ENCODE measurements at regions of chr13 and their contacts with region 1.

Region 1: GRCh38 chr13:27362064-27362883 is 62.1 kb upstream of the GTF3A start:
- DNase-seq: peak; percentile 87 to 93
- H3K4me3 ChIP-seq: peak overlapping the region; percentile 44
- H3K4me3 Mint-ChIP-seq: peak overlapping the region; percentile 71
- H3K27ac Mint-ChIP-seq: peak overlapping the region; percentile 28
- H3K4me1 ChIP-seq: peaks cover 4% of the 10 kb centered on the region; the same call in 1 of the 2 replicates
- H3K4me1 Mint-ChIP-seq: peaks cover 18% of the 10 kb centered on the region
- H3K27me3 ChIP-seq: no peaks in the 10 kb centered on the region; the same call in 1 of the 2 replicates
- H3K27me3 Mint-ChIP-seq: no peaks in the 10 kb centered on the region
- CTCF ChIP-seq: peak; percentile 94 to 98

Region 2: GRCh38 chr13:26698392-26699196 is 663.7 kb before region 1 on chr13:
- CTCF ChIA-PET with region 1: no interaction called
- POLR2A ChIA-PET with region 1: no interaction called
- intact Hi-C with region 1: no loop called
- DNase-seq: peak; percentile 78 to 88
- H3K4me3 ChIP-seq: no peak overlapping the region
- H3K4me3 Mint-ChIP-seq: no peak overlapping the region
- H3K27ac Mint-ChIP-seq: no peak overlapping the region
- H3K4me1 ChIP-seq: no peaks in the 10 kb centered on the region
- H3K4me1 Mint-ChIP-seq: no peaks in the 10 kb centered on the region
- H3K27me3 ChIP-seq: no peaks in the 10 kb centered on the region; the same call in 1 of the 2 replicates
- H3K27me3 Mint-ChIP-seq: peaks cover 25% of the 10 kb centered on the region
- CTCF ChIP-seq: peak; percentile 97

Region 3: GRCh38 chr13:26946684-26947343 is 415.5 kb before region 1 on chr13:
- CTCF ChIA-PET with region 1: interaction called, 128 read pairs
- POLR2A ChIA-PET with region 1: interaction called, 6 read pairs
- intact Hi-C with region 1: loop called (anchors 1 kb)
- DNase-seq: peak; percentile 32 to 69
- H3K4me3 ChIP-seq: no peak overlapping the region
- H3K4me3 Mint-ChIP-seq: no peak overlapping the region
- H3K27ac Mint-ChIP-seq: no peak overlapping the region
- H3K4me1 ChIP-seq: peaks cover 48% of the 10 kb centered on the region
- H3K4me1 Mint-ChIP-seq: peaks cover 34% of the 10 kb centered on the region
- H3K27me3 ChIP-seq: no peaks in the 10 kb centered on the region
- H3K27me3 Mint-ChIP-seq: no peaks in the 10 kb centered on the region
- CTCF ChIP-seq: peak; percentile 87 to 97

Region 4: DNA sequence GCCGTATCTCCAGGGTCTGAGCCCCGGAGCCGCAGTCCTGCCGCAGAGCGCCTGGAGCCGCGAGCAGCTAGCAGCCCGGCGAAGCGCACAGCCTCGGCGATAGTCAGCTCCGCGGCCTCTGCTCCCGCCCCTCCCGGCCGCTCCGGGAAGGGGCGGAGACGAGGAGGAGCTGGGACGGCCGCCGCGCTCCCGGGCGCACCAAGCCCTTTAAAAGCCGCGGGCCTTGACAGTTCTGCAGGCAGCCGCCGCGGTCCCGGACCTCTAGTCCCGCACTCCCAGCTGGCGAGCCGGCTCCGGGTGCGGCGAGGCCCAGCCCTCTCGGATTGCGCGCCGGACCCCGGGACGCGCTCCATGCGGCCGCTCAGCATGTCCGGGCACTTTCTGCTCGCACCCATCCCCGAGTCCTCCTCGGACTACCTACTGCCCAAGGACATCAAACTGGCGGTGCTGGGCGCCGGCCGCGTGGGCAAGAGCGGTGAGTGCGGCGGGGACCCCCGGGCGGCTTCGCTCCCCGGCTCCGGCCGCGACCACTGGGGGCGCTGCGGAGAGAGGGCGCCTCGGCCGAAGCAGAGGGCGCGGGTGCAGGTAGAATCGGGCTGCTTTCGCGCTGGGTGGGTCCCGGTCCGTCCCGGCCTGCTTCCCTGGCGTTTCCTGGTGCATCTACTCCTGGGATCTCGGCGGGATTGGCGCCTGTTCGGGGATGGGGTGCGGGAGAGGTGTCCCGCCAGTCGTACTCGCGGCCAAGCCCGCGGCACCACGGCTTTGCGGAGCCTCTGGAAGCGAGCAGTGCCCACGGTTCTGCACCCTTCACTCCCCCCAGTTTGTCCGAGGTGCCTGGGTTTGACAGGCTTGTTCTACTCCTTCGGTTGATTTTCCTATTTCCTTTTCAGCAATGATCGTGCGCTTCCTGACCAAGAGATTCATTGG is 91.4 kb before region 1 on chr13 and contains the start of gene RASL11A:
- CTCF ChIA-PET with region 1: interaction called, 5 read pairs
- POLR2A ChIA-PET with region 1: no interaction called
- intact Hi-C with region 1: loop called (anchors 5 kb)
- DNase-seq: peak; percentile 87 to 91
- H3K4me3 ChIP-seq: peak within 1 kb of the TSS; percentile 82
- H3K4me3 Mint-ChIP-seq: peak within 1 kb of the TSS; percentile 81
- H3K27ac Mint-ChIP-seq: peak within 1 kb of the TSS; percentile 74
- H3K4me1 ChIP-seq: peaks cover 4% of the 10 kb centered on the region; the same call in 1 of the 2 replicates
- H3K4me1 Mint-ChIP-seq: peaks cover 7% of the 10 kb centered on the region
- H3K27me3 ChIP-seq: no peaks in the 10 kb centered on the region
- H3K27me3 Mint-ChIP-seq: no peaks in the 10 kb centered on the region
- CTCF ChIP-seq: peak; percentile 79 to 97
- total RNA-seq, gene RASL11A: 18.8 and 21.0 TPM in 2 replicates

Region 5: GRCh38 chr13:27374650-27375049 is 12.4 kb after region 1 on chr13:
- CTCF ChIA-PET with region 1: interaction called, 57 read pairs
- POLR2A ChIA-PET with region 1: interaction called, 4 read pairs
- intact Hi-C with region 1: loop called (anchors 1 kb)
- DNase-seq: peak; percentile 75 to 82
- H3K4me3 ChIP-seq: no peak overlapping the region
- H3K4me3 Mint-ChIP-seq: no peak overlapping the region
- H3K27ac Mint-ChIP-seq: no peak overlapping the region
- H3K4me1 ChIP-seq: peaks cover 11% of the 10 kb centered on the region; the same call in 1 of the 2 replicates
- H3K4me1 Mint-ChIP-seq: peaks cover 23% of the 10 kb centered on the region
- H3K27me3 ChIP-seq: no peaks in the 10 kb centered on the region
- H3K27me3 Mint-ChIP-seq: no peaks in the 10 kb centered on the region
- CTCF ChIP-seq: peak; percentile 61 to 90

Region 6: DNA sequence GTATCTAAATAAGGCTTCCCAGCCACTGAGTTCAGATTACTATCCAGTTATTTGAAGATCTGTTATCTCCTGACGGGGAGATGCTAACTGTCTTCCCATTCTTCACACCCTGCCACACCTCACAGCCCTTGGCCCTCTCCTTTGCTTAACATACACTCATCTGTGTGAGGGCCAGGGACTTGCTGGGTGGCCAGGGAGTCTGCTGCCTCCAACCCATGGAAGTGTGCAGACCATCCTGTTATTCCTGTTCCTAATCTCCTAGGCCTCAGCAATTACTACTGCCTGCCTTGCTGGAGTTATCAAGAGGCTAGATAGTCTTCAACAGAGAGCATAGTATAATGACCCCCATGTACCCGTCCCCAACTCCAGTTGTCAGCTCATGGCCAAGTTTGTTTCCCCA is 26.0 kb after region 1 on chr13:
- CTCF ChIA-PET with region 1: no interaction called
- POLR2A ChIA-PET with region 1: no interaction called
- intact Hi-C with region 1: no loop called
- DNase-seq: peak; percentile 64 to 73
- H3K4me3 ChIP-seq: no peak overlapping the region
- H3K4me3 Mint-ChIP-seq: no peak overlapping the region
- H3K27ac Mint-ChIP-seq: no peak overlapping the region
- H3K4me1 ChIP-seq: peaks cover 10% of the 10 kb centered on the region; the same call in 1 of the 2 replicates
- H3K4me1 Mint-ChIP-seq: peaks cover 22% of the 10 kb centered on the region
- H3K27me3 ChIP-seq: no peaks in the 10 kb centered on the region
- H3K27me3 Mint-ChIP-seq: no peaks in the 10 kb centered on the region
- CTCF ChIP-seq: no peak

Region 7: DNA sequence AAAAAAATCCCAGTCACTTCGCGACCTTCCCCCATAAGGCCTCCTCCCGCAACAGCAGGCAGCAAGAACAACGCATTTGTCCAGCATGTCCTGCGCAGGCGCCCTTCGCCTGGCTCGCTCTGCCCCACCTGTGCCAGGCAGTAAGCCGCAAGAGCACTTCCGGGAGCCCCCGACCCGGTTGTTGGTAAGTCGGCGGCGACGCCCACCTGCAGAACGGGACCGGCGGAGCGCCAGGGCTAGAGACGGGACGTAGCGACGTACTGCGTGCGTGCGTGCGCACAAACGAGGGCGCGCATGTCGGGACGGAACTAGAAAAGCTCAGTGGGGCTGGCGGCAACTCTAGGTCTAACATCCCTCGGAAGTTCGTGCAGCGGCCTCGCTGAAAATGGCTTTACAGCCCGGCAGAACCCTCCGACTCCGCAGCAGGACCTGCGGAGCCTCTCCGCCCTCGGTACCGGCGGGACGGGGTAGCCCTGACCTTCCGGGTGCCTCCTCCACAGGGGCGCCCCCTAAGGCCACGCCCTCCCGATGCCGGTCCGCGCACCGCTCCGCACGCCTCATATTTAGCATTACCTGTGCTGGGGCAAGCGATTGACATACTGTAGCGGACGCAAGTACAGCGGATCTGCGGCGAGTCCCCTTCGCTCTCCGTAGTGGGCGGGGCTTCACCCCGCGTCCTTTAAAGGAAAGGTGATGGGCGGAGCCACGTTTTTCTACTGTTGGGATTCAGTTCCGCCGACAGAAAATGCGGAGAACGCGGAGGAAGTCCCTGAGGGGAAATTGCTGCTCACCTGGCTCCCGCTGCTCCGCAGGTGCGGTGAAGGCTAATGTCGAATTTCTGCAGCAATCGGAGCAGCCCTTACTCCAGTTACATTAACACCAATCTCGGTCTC is 87.9 kb after region 1 on chr13 and contains the start of gene MTIF3:
- CTCF ChIA-PET with region 1: interaction called, 11 read pairs
- POLR2A ChIA-PET with region 1: no interaction called
- intact Hi-C with region 1: no loop called
- DNase-seq: peak; percentile 98
- H3K4me3 ChIP-seq: peak within 1 kb of the TSS; percentile 71
- H3K4me3 Mint-ChIP-seq: peak within 1 kb of the TSS; percentile 73
- H3K27ac Mint-ChIP-seq: peak within 1 kb of the TSS; percentile 55
- H3K4me1 ChIP-seq: peaks cover 12% of the 10 kb centered on the region; the same call in 1 of the 2 replicates
- H3K4me1 Mint-ChIP-seq: peaks cover 14% of the 10 kb centered on the region
- H3K27me3 ChIP-seq: no peaks in the 10 kb centered on the region
- H3K27me3 Mint-ChIP-seq: no peaks in the 10 kb centered on the region
- CTCF ChIP-seq: peak in 1 of 2 experiments; percentile 26
- total RNA-seq, gene MTIF3: 41.8 and 51.5 TPM in 2 replicates

Region 8: GRCh38 chr13:27997904-27998522 is 635.7 kb after region 1 on chr13:
- CTCF ChIA-PET with region 1: interaction called, 5 read pairs
- POLR2A ChIA-PET with region 1: no interaction called
- intact Hi-C with region 1: loop called (anchors 1 kb)
- DNase-seq: peak; percentile 80 to 82
- H3K4me3 ChIP-seq: no peak overlapping the region
- H3K4me3 Mint-ChIP-seq: no peak overlapping the region
- H3K27ac Mint-ChIP-seq: no peak overlapping the region
- H3K4me1 ChIP-seq: no peaks in the 10 kb centered on the region
- H3K4me1 Mint-ChIP-seq: peaks cover 7% of the 10 kb centered on the region
- H3K27me3 ChIP-seq: no peaks in the 10 kb centered on the region
- H3K27me3 Mint-ChIP-seq: no peaks in the 10 kb centered on the region
- CTCF ChIP-seq: peak; percentile 65 to 82

Measured in Caco-2 (cell line).